Aorta (tissue), 5 donors: ENCODE measurements at regions of chr4 and their contacts with region 1.

Region 1: DNA sequence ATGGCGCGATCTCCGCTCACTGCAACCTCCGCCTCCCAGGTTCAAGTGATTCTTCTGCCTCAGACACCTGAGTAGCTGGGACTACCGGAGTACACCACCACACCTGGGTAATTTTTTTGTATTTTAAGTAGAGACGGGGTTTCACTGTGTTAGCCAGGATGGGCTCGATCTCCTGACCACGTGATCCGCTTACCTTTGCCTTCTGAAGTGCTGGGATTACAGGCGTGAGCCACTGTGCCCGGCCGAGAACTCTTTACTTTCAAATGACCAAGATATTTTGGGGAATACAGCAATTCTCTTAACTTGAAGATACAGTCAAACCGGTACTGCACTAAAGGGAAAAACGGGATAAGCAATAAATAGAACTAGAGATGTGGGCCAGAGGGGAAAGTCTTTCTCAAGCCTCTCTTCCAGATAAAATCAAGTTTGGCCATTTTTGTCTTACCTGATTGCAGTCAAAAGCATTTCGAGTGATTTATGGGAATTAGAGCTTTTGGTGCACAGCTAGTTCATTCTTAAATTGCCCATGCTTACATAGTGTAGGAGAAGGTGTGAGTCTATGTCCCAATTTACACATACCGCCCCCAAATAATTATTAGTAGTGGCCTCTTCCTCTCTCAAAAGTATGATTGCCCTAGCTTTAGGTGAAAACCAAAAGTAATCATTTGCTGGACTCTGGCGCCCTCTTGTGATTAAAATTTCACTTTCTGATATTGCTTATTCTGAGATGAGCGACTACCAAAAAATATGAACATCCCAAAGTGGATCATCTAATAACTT is 53.2 kb upstream of the ABCG2 start:
- DNase-seq: no peak
- ATAC-seq: peak; percentile 71
- H3K4me3 ChIP-seq: no peak overlapping the region
- H3K27ac ChIP-seq: no peak overlapping the region
- H3K4me1 ChIP-seq: no peaks in the 10 kb centered on the region
- H3K27me3 ChIP-seq: no peaks in the 10 kb centered on the region

Region 2: DNA sequence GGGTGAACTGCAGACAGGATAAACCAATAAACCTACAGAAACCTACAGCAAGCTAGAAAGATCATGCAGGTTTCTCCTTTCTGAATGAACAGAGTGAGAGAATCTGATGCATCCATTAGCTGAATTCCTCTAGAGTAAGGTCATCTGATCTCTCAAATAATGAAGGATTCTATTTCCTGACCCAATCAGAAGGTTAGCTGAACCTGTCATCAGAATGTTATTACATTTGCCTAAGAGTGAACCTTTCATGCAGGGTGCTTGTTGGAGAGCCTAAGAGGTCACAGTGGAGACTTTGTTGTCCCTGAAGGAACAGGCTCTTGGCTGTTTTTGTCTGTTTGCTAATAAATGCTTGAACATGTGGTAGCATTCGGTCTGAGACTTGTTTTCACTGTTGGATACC is 354.8 kb before region 1 on chr4:
- intact Hi-C with region 1: loop called (anchors 2 to 5 kb)
- DNase-seq: no peak
- ATAC-seq: no peak
- H3K4me3 ChIP-seq: no peak overlapping the region
- H3K27ac ChIP-seq: no peak overlapping the region
- H3K4me1 ChIP-seq: no peaks in the 10 kb centered on the region
- H3K27me3 ChIP-seq: no peaks in the 10 kb centered on the region

Region 3: DNA sequence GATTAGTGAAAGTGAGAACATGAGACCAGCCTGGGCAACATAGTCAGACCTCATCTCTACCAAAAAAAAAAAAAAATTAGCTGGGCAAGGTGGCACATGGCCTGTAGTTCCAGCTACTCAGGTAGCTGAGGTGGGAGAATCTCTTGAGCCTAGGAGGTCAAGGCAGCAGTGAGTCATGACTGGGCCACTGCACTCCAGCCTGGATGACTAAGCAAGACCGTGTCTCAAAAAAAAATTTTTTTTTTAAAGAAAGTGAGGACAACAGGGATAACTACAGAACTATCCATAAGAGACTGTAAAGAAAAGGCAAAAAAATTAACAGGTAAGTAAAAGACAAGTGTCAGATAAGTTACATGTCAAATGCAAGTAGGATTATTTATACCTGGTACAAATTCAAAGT is 249.7 kb before region 1 on chr4:
- intact Hi-C with region 1: loop called in 1 of 2 experiments (anchors 10 kb)
- DNase-seq: no peak
- ATAC-seq: no peak
- H3K4me3 ChIP-seq: no peak overlapping the region
- H3K27ac ChIP-seq: no peak overlapping the region
- H3K4me1 ChIP-seq: no peaks in the 10 kb centered on the region
- H3K27me3 ChIP-seq: no peaks in the 10 kb centered on the region

Region 4: GRCh38 chr4:88030565-88031310 is 180.9 kb before region 1 on chr4:
- intact Hi-C with region 1: loop called in 1 of 2 experiments (anchors 2 kb)
- DNase-seq: no peak
- ATAC-seq: no peak
- H3K4me3 ChIP-seq: no peak overlapping the region
- H3K27ac ChIP-seq: no peak overlapping the region
- H3K4me1 ChIP-seq: peaks cover 2 to 6% of the 10 kb centered on the region in 2 donors
- H3K27me3 ChIP-seq: no peaks in the 10 kb centered on the region

Region 5: GRCh38 chr4:88411473-88412096 is 199.9 kb after region 1 on chr4:
- intact Hi-C with region 1: no loop called
- DNase-seq: no peak
- ATAC-seq: no peak
- H3K4me3 ChIP-seq: no peak overlapping the region
- H3K27ac ChIP-seq: no peak overlapping the region
- H3K4me1 ChIP-seq: no peaks in the 10 kb centered on the region
- H3K27me3 ChIP-seq: no peaks in the 10 kb centered on the region

Region 6: DNA sequence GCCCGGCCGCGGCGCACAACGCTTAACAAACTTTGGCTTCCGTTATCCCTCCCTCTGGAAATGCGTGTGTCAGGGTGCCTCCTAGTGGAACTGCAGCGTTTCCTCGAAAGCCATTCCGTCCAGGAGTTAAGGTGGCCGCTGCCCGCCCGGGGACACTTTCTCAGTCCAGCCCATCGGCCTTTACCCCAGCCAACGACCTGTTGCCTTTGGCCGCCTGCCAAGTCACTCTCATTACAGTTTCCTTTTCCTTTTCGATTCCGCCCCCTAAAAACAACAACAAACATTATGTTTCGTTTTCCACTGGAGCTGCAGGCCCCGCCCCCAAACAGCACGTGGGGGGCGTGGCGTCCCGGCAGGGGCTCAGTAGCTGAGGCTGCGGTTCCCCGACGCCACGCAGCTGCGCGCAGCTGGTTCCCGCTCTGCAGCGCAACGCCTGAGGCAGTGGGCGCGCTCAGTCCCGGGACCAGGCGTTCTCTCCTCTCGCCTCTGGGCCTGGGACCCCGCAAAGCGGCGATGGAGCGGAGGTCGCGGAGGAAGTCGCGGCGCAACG is 245.2 kb after region 1 on chr4 and contains the start of gene HERC5:
- intact Hi-C with region 1: loop called in 1 of 2 experiments (anchors 5 kb)
- DNase-seq: peak; percentile 95 to 97
- ATAC-seq: peak; percentile 96
- H3K4me3 ChIP-seq: peak within 1 kb of the TSS; percentile 20 to 82
- H3K27ac ChIP-seq: peak within 1 kb of the TSS; percentile 41 to 57
- H3K4me1 ChIP-seq: no peaks in the 10 kb centered on the region
- H3K27me3 ChIP-seq: no peaks in the 10 kb centered on the region
- total RNA-seq, gene HERC5: 9.6 to 9.8 TPM